ENCODE measurements at regions of chr5 and their contacts with region 1.

Region 1: DNA sequence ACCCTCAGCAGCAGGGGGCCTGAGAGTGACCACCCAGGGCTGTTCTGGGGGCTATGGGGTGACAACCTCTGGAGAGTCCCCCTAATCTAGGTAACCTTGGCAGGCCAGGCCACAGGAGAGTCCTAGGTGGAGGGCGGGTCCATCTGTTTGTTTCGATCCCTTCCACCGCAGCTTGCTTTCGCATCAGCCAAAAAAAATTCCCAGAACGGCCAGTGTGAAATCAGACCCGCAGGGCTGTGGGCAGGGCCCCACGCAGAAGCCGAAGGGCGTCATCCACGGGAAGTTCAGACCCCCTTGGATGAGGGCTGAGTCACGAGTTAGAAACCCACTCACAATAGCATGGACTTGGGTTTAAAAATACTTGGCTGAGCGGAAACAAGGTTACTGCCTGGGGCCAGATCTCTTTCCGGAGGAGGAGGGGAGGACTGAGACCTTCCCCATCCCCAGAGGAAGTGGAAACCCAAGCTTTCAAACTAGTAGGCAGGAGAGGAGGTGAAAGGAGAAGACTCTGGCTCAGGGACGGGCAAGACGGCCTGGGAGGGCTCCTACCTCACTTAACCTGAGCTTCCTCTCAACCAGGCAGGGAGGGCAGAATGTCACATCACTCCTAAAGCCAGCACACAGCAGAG is 8.5 kb downstream of the STK10 start:
- DNase-seq: peak; percentile 60 to 76
- ATAC-seq: peak; percentile 24 to 38 (median 28)
- H3K4me3 ChIP-seq: peak overlapping the region; percentile 28
- H3K4me3 Mint-ChIP-seq: peak overlapping the region; percentile 90
- H3K27ac ChIP-seq: peak overlapping the region; percentile 95
- H3K27ac Mint-ChIP-seq: peak overlapping the region; percentile 97 to 98
- H3K4me1 ChIP-seq: peaks cover 98% of the 10 kb centered on the region
- H3K4me1 Mint-ChIP-seq: peaks cover 76 to 77% of the 10 kb centered on the region in 2 donors
- H3K27me3 ChIP-seq: no peaks in the 10 kb centered on the region
- H3K27me3 Mint-ChIP-seq: no peaks in the 10 kb centered on the region
- CTCF ChIP-seq: no peak

Region 2: DNA sequence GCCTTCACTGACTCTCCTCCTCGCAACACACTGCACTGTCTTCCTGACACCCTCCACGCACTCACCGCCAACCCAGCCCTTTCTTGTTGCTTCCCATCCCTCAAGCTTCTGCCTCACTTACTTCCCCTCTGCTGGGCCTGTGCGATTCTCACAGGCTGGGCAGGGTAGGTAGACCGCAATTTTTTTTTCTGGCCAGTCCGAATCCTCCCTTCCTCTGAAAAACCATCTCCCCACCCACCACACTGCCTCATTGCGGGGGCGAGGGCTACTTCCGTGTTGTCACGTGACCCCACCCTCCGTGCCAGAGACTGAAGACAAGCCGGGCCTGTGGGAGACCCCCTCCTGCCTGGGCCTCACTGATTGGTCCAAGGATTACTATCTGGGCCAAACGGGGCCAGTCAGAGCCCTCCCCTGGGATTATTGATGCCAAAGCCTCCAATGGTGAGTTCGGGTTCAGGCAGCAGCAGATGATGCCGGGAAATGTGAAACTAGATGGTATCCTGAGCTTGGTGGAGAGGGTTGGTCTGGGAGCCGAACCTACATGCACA is 64.5 kb before region 1 on chr5:
- intact Hi-C with region 1: loop called (anchors 1 kb)
- DNase-seq: peak; percentile 69 to 86
- ATAC-seq: peak; percentile 47 to 76 (median 73)
- H3K4me3 ChIP-seq: peak overlapping the region; percentile 2
- H3K4me3 Mint-ChIP-seq: peak overlapping the region; percentile 85
- H3K27ac ChIP-seq: peak overlapping the region; percentile 85
- H3K27ac Mint-ChIP-seq: peak overlapping the region; percentile 94 to 97
- H3K4me1 ChIP-seq: peaks cover 96% of the 10 kb centered on the region
- H3K4me1 Mint-ChIP-seq: peaks cover 76 to 91% of the 10 kb centered on the region in 2 donors
- H3K27me3 ChIP-seq: no peaks in the 10 kb centered on the region
- H3K27me3 Mint-ChIP-seq: no peaks in the 10 kb centered on the region
- CTCF ChIP-seq: no peak

Region 3: GRCh38 chr5:172150514-172151425 is 28.7 kb before region 1 on chr5:
- intact Hi-C with region 1: loop called (anchors 2 kb)
- DNase-seq: peak; percentile 52 to 54
- ATAC-seq: peak; percentile 66 to 79 (median 74)
- H3K4me3 ChIP-seq: no peak overlapping the region
- H3K4me3 Mint-ChIP-seq: peak overlapping the region; percentile 78
- H3K27ac ChIP-seq: peak overlapping the region; percentile 71
- H3K27ac Mint-ChIP-seq: peak overlapping the region; percentile 97 to 98
- H3K4me1 ChIP-seq: peaks cover 89% of the 10 kb centered on the region
- H3K4me1 Mint-ChIP-seq: peaks cover 81 to 86% of the 10 kb centered on the region in 2 donors
- H3K27me3 ChIP-seq: no peaks in the 10 kb centered on the region
- H3K27me3 Mint-ChIP-seq: no peaks in the 10 kb centered on the region
- CTCF ChIP-seq: no peak

Region 4: DNA sequence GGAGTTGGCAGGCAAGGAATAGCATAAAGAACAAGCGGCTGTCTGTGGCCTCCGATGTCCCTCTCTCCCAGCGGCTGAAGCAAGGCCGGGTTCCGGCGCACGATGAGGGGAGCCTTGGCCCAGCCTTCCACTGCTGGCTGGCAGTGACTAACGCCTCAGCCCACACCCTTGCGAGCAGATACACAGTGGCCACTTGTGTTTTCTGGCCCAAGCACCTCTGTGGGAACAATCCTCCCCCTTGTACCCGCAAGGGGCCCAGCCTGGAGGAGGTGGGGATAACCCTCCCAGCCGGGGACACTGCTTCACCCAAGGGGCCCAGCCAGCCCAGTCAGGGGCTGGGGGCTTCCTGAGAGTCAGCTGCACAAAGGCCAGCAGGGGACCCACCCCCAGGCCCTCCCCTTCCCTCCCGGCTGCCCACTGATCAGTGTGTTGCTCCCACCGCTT is 14.7 kb before region 1 on chr5:
- intact Hi-C with region 1: no loop called
- DNase-seq: no peak
- ATAC-seq: peak in 1 of 3 donors; percentile 12
- H3K4me3 ChIP-seq: no peak overlapping the region
- H3K4me3 Mint-ChIP-seq: peak overlapping the region; percentile 28
- H3K27ac ChIP-seq: peak overlapping the region; percentile 20
- H3K27ac Mint-ChIP-seq: peak overlapping the region; percentile 97 to 98
- H3K4me1 ChIP-seq: peaks cover 98% of the 10 kb centered on the region
- H3K4me1 Mint-ChIP-seq: peaks cover 70 to 89% of the 10 kb centered on the region in 2 donors
- H3K27me3 ChIP-seq: no peaks in the 10 kb centered on the region
- H3K27me3 Mint-ChIP-seq: no peaks in the 10 kb centered on the region
- CTCF ChIP-seq: no peak